ENCODE measurements at regions of chr12 and their contacts with region 1.

Region 1: DNA sequence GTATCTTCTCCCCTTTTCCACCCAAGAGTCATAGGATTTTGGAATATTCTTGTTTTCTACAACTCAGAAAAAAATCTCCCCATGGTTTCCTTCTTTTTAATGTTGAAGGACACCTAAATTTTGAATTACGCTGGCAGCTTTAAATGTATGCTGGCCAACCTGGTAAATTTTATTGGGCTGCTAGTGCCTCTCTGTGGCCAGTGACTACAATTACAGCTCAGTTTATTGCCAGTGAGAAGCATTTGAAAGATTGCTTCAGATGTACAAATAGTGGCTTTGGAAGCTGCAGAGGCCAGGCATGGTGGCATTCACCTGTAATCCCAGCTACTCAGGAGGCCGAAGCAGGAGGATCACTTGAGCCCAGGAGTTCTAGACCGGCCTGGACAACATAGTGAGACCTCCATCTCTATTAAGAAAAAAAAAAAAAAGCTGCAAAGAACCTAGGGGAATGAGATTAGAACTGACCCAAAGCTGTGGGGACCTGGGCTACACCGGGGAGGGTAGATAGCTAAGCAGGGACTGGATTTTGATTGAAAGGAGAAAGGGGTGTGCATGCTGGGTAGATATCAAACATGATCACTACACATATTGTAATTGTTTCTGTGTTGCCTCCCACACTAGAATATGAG is 7.6 kb upstream of the RAB21 start:
- DNase-seq: peak; percentile 79
- H3K4me3 ChIP-seq: no peak overlapping the region
- H3K27ac ChIP-seq: no peak overlapping the region
- H3K4me1 ChIP-seq: peaks cover 21% of the 10 kb centered on the region
- H3K27me3 ChIP-seq: no peaks in the 10 kb centered on the region
- CTCF ChIP-seq: peak; percentile 84

Region 2: DNA sequence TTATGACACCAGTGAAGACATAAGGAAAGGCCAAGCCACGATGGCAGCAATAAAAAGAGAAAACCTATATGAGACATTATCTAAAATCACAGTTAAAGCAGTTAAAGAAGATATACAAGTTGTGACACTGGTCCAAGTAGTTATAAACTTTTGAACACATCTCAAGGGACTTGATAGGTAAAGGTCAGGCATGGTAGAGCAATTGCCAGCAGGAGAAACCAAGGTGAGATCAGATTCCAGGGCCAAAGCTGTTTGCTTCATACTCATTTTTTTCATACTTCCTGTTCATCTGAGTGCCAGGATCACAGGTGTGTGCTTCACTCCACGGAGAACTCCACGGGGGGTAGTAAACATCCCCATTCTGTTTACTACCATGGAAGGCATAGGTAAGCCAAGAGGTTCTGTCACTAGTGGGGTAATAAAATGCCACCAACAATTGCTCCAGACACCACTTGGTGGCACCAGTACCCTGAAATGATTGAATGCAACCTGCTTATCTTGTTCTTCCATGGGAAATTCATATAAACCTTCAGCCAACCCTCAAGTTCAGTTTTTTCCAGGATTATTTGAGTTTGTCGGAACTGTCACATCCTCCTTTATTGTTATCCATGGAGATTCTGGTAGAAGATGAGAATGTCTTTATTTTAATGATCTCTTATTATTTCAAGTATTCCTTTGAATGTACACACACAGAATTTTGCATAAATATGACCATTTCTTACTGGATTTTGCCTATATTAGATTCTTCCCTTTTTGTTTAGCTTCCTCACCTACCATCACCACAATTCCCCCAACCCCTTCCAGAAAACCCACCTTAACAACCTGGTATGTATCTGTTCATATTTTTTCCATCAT is 530.1 kb before region 1 on chr12:
- CTCF ChIA-PET with region 1: interaction called, 3 read pairs
- POLR2A ChIA-PET with region 1: no interaction called
- intact Hi-C with region 1: loop called (anchors 5 kb)
- DNase-seq: peak; percentile 79
- H3K4me3 ChIP-seq: no peak overlapping the region
- H3K27ac ChIP-seq: no peak overlapping the region
- H3K4me1 ChIP-seq: peaks cover 18% of the 10 kb centered on the region
- H3K27me3 ChIP-seq: no peaks in the 10 kb centered on the region
- CTCF ChIP-seq: peak; percentile 82

Region 3: DNA sequence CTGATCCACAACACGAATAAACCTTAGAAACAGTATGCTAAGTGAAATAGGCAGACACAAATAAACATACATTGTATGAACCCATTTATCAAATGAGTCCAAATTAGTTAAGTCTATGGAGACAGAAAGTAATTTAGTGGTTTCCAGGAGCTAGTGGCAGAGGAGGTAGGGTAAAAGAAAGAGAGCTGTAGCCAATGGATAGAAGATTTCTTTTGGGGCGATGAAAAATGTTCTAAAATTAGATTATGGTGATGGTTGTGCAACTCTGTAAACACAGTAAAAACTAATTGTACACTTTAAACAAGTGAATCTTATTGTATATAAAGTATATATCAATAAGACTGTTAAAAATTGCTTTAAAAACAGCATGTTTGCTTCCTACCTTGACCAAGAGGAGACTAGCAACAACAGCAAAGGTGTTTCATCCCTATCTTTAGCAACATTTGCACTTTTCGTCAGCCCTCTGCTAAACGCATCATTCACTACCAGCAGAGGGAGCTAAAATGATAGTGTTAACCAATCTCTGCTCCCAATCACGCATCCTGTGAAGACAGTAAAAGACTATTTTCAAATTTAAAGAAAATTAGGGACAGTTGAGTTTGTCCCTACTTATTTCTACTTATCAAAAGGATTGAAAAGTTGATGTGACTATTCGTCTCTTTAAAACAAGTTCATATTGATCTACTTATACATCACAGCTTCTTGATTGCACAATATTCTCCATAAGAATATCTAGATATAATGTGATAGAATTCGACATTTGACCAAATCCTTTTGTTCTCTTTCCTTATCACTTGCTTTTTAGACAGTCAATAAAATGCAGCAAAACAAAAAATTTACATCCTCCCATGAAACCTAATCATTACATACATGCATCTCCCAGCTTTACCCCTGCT is 331.5 kb before region 1 on chr12:
- CTCF ChIA-PET with region 1: interaction called, 4 read pairs
- POLR2A ChIA-PET with region 1: no interaction called
- intact Hi-C with region 1: loop called (anchors 5 kb)
- DNase-seq: peak; percentile 76
- H3K4me3 ChIP-seq: no peak overlapping the region
- H3K27ac ChIP-seq: no peak overlapping the region
- H3K4me1 ChIP-seq: peaks cover 4% of the 10 kb centered on the region
- H3K27me3 ChIP-seq: no peaks in the 10 kb centered on the region
- CTCF ChIP-seq: peak; percentile 88

Region 4: DNA sequence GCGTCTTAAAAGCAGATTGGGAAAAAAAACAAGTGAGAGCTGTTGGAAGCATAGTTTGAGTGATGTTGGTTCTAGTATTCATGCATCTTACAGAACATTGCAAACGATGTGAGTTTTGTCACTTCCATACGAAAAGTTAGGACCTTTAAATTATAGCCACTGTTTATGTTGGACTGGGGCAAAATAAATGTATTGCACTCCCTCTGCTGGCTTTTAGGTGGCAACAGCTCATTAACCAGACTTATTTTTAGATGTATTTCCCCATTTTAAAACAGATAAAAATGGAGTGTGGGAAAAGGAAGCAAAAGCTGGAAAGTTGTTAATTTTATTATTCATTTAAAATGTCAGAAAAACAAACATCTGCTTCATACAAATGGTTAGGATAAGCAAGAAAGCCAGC is 195.6 kb before region 1 on chr12:
- CTCF ChIA-PET with region 1: interaction called, 3 read pairs
- POLR2A ChIA-PET with region 1: no interaction called
- intact Hi-C with region 1: loop called (anchors 10 kb)
- DNase-seq: peak; percentile 58
- H3K4me3 ChIP-seq: no peak overlapping the region
- H3K27ac ChIP-seq: no peak overlapping the region
- H3K4me1 ChIP-seq: peaks cover 3% of the 10 kb centered on the region
- H3K27me3 ChIP-seq: no peaks in the 10 kb centered on the region
- CTCF ChIP-seq: peak; percentile 79

Region 5: GRCh38 chr12:71636704-71637115 is 110.4 kb before region 1 on chr12:
- CTCF ChIA-PET with region 1: interaction called, 9 read pairs
- POLR2A ChIA-PET with region 1: no interaction called
- intact Hi-C with region 1: loop called (anchors 5 kb)
- DNase-seq: peak; percentile 86
- H3K4me3 ChIP-seq: no peak overlapping the region
- H3K27ac ChIP-seq: no peak overlapping the region
- H3K4me1 ChIP-seq: peaks cover 3% of the 10 kb centered on the region
- H3K27me3 ChIP-seq: no peaks in the 10 kb centered on the region
- CTCF ChIP-seq: peak; percentile 87

Measured in A673 (cell line).